CD4-positive, alpha-beta memory T cell (primary cell): ENCODE measurements at regions of chr2 and their contacts with region 1.

Region 1: GRCh38 chr2:102187496-102188150 is 800 bp downstream of the IL1RL2 start:
- DNase-seq: peak; percentile 19 to 52 (median 39)
- H3K4me3 ChIP-seq: peak overlapping the region in 1 of 2 donors; percentile 36
- H3K4me3 Mint-ChIP-seq: peak overlapping the region; percentile 86 to 95 (median 88)
- H3K27ac ChIP-seq: no peak overlapping the region
- H3K27ac Mint-ChIP-seq: peak overlapping the region in 5 of 7 donors; percentile 81 to 93 (median 85)
- H3K4me1 ChIP-seq: peaks cover 9% of the 10 kb centered on the region
- H3K4me1 Mint-ChIP-seq: peaks cover 8 to 19% (median 13%) of the 10 kb centered on the region in 4 donors
- H3K27me3 ChIP-seq: no peaks in the 10 kb centered on the region
- H3K27me3 Mint-ChIP-seq: peaks cover 5 to 8% of the 10 kb centered on the region in 2 donors

Region 2: DNA sequence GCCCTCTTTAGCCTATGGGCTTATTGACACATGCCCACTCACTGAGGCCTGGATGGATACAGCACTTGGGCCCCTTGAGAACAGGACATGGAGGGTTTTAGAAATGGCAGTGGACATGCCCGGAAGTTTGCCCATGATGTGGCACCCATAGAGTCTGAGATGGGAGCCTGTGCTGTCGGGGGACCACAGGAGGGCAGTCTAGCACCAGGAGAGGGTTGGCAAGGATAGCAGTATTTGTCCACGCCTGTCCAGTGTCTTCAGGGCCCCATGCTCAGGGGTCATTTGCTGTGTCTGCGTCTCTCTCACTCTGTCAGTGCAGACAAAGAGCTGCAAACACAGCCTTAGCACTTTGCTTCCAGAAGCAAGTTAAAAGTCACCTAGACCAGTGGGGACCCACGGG is 47.9 kb after region 1 on chr2:
- CTCF ChIA-PET with region 1: interaction called, 118 read pairs
- POLR2A ChIA-PET with region 1: interaction called, 10 read pairs
- intact Hi-C with region 1: loop called (anchors 1 kb)
- DNase-seq: no peak
- H3K4me3 ChIP-seq: no peak overlapping the region
- H3K4me3 Mint-ChIP-seq: no peak overlapping the region
- H3K27ac ChIP-seq: no peak overlapping the region
- H3K27ac Mint-ChIP-seq: no peak overlapping the region
- H3K4me1 ChIP-seq: peaks cover 2% of the 10 kb centered on the region
- H3K4me1 Mint-ChIP-seq: peaks cover under 1 to 16% (median 7%) of the 10 kb centered on the region in 4 donors
- H3K27me3 ChIP-seq: no peaks in the 10 kb centered on the region
- H3K27me3 Mint-ChIP-seq: no peaks in the 10 kb centered on the region